ENCODE measurements at regions of chr1 and their contacts with region 1.

Region 1: DNA sequence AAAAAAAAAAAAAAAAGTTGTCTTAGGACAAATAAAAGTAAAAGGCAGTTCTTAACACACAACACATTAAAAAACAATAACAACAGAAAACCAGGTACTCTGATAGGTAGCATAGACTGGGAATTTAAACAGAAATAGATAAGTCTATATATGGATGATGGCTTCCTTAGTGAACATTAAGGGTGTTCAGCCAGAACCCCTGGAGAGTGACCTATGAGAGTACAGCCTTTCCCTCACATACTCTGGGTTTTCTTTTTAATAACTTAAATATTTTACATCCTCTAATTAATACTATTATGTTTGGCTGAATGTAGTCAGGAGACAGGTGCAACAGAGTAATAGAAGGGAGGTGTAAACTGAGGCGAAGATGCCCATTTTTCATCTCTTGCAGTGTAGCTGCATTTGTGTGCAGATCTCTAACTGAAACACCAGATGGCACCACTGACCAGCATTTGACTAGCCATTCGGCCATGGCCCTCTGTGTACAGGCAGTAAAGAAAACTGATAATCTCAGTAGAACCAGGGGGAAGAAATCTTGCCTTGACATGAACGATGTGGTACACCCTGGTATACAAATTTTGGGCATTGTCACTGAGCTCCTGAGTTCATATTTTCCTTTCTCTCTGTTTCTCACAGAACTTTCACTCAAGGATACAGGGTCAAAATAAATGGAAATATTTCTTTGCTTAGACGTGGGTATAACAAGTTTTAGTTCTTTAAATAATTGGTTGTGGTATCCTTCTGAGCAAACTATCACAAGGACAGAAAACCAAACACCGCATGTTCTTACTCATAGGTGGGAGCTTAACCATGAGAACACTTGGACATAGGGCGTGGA is 7.6 kb downstream of the TTF2 start:
- DNase-seq: no peak
- H3K4me3 ChIP-seq: no peak overlapping the region
- H3K27ac ChIP-seq: no peak overlapping the region
- H3K4me1 ChIP-seq: no peaks in the 10 kb centered on the region
- H3K27me3 ChIP-seq: no peaks in the 10 kb centered on the region
- CTCF ChIP-seq: peak; percentile 74 to 86 (median 77)

Region 2: DNA sequence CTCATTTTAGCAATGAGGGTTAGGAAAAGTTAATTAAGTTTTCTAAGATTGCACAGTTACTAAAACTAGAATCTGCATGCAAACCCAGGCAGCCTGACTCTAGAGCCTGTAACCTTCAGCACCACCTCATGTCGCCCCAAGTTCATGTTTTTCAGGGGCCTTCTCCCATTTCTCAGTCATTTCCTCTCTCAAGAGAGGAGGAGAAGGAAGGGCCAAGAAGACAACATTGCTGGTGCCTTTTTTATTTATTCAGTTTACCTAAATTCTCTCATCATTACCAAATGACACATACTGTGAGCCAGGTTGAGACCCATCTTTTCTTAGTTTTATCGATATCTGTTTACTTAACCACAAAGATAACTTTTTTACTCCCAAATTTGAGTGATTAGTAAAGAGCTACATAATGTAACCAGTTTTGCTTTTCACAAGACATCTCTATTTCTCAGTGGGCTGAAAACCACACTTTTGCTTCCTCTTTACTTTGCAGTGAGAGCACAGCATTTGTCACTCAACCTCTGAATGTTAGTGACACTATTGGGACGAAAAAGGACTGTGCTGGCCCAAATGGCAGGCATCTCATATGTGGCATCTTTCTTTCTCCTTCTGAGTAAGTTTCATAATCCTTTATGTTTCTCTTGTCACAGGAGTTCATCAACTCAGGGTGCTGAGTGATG is 66.4 kb before region 1 on chr1 and contains the start of gene CD101:
- intact Hi-C with region 1: no loop called
- DNase-seq: no peak
- H3K4me3 ChIP-seq: no peak within 1 kb of the TSS
- H3K27ac ChIP-seq: no peak within 1 kb of the TSS
- H3K4me1 ChIP-seq: no peaks in the 10 kb centered on the region
- H3K27me3 ChIP-seq: no peaks in the 10 kb centered on the region
- CTCF ChIP-seq: no peak
- total RNA-seq, gene CD101: not detected

Region 3: GRCh38 chr1:117128323-117129079 is 60.7 kb after region 1 on chr1:
- intact Hi-C with region 1: loop called (anchors 1 kb)
- DNase-seq: no peak
- H3K4me3 ChIP-seq: no peak overlapping the region
- H3K27ac ChIP-seq: peak overlapping the region in 1 of 2 donors; percentile 19
- H3K4me1 ChIP-seq: peaks cover 0 to 4% of the 10 kb centered on the region in 2 donors
- H3K27me3 ChIP-seq: no peaks in the 10 kb centered on the region
- CTCF ChIP-seq: peak; percentile 42 to 70 (median 55)

Region 4: GRCh38 chr1:117284399-117285215 is 216.9 kb after region 1 on chr1:
- intact Hi-C with region 1: loop called (anchors 1 kb)
- DNase-seq: no peak
- H3K4me3 ChIP-seq: no peak overlapping the region
- H3K27ac ChIP-seq: no peak overlapping the region
- H3K4me1 ChIP-seq: no peaks in the 10 kb centered on the region
- H3K27me3 ChIP-seq: no peaks in the 10 kb centered on the region
- CTCF ChIP-seq: peak in 1 of 3 experiments; percentile 44

Measured in ascending aorta (tissue), 2 donors.